B cell (primary cell): ENCODE measurements at regions of chr1 and their contacts with region 1.

Region 1: GRCh38 chr1:193754732-193755427 is 568.5 kb upstream of the B3GALT2 start:
- DNase-seq: peak; percentile 4
- ATAC-seq: no peak
- H3K4me3 ChIP-seq: no peak overlapping the region
- H3K4me3 Mint-ChIP-seq: no peak overlapping the region
- H3K27ac ChIP-seq: no peak overlapping the region
- H3K27ac Mint-ChIP-seq: no peak overlapping the region
- H3K4me1 ChIP-seq: no peaks in the 10 kb centered on the region
- H3K4me1 Mint-ChIP-seq: no peaks in the 10 kb centered on the region
- H3K27me3 ChIP-seq: no peaks in the 10 kb centered on the region
- H3K27me3 Mint-ChIP-seq: no peaks in the 10 kb centered on the region
- CTCF ChIP-seq: peak; percentile 39

Region 2: GRCh38 chr1:193406901-193407300 is 348.0 kb before region 1 on chr1:
- CTCF ChIA-PET with region 1: interaction called, 5 read pairs
- POLR2A ChIA-PET with region 1: no interaction called
- intact Hi-C with region 1: loop called (anchors 1 kb)
- DNase-seq: peak; percentile 62
- ATAC-seq: peak; percentile 53
- H3K4me3 ChIP-seq: no peak overlapping the region
- H3K4me3 Mint-ChIP-seq: no peak overlapping the region
- H3K27ac ChIP-seq: no peak overlapping the region
- H3K27ac Mint-ChIP-seq: no peak overlapping the region
- H3K4me1 ChIP-seq: peaks cover 0 to 6% of the 10 kb centered on the region in 2 donors
- H3K4me1 Mint-ChIP-seq: peaks cover 5% of the 10 kb centered on the region
- H3K27me3 ChIP-seq: no peaks in the 10 kb centered on the region
- H3K27me3 Mint-ChIP-seq: no peaks in the 10 kb centered on the region
- CTCF ChIP-seq: peak; percentile 85

Region 3: GRCh38 chr1:193697105-193697762 is 57.6 kb before region 1 on chr1:
- CTCF ChIA-PET with region 1: no interaction called
- POLR2A ChIA-PET with region 1: no interaction called
- intact Hi-C with region 1: loop called (anchors 10 kb)
- DNase-seq: no peak
- ATAC-seq: no peak
- H3K4me3 ChIP-seq: no peak overlapping the region
- H3K4me3 Mint-ChIP-seq: no peak overlapping the region
- H3K27ac ChIP-seq: no peak overlapping the region
- H3K27ac Mint-ChIP-seq: no peak overlapping the region
- H3K4me1 ChIP-seq: no peaks in the 10 kb centered on the region
- H3K4me1 Mint-ChIP-seq: no peaks in the 10 kb centered on the region
- H3K27me3 ChIP-seq: no peaks in the 10 kb centered on the region
- H3K27me3 Mint-ChIP-seq: peaks cover 7% of the 10 kb centered on the region
- CTCF ChIP-seq: no peak